B cell (primary cell): ENCODE measurements at regions of chr17 and their contacts with region 1.

Region 1: GRCh38 chr17:80195731-80196529 is 24.2 kb downstream of the SGSH start:
- DNase-seq: peak; percentile 74
- ATAC-seq: peak; percentile 24
- H3K4me3 ChIP-seq: no peak overlapping the region
- H3K4me3 Mint-ChIP-seq: no peak overlapping the region
- H3K27ac ChIP-seq: no peak overlapping the region
- H3K27ac Mint-ChIP-seq: no peak overlapping the region
- H3K4me1 ChIP-seq: no peaks in the 10 kb centered on the region
- H3K4me1 Mint-ChIP-seq: no peaks in the 10 kb centered on the region
- H3K27me3 ChIP-seq: peaks cover 0 to 11% (median 0%) of the 10 kb centered on the region in 4 experiments
- H3K27me3 Mint-ChIP-seq: peaks cover 16% of the 10 kb centered on the region
- CTCF ChIP-seq: peak; percentile 99

Region 2: DNA sequence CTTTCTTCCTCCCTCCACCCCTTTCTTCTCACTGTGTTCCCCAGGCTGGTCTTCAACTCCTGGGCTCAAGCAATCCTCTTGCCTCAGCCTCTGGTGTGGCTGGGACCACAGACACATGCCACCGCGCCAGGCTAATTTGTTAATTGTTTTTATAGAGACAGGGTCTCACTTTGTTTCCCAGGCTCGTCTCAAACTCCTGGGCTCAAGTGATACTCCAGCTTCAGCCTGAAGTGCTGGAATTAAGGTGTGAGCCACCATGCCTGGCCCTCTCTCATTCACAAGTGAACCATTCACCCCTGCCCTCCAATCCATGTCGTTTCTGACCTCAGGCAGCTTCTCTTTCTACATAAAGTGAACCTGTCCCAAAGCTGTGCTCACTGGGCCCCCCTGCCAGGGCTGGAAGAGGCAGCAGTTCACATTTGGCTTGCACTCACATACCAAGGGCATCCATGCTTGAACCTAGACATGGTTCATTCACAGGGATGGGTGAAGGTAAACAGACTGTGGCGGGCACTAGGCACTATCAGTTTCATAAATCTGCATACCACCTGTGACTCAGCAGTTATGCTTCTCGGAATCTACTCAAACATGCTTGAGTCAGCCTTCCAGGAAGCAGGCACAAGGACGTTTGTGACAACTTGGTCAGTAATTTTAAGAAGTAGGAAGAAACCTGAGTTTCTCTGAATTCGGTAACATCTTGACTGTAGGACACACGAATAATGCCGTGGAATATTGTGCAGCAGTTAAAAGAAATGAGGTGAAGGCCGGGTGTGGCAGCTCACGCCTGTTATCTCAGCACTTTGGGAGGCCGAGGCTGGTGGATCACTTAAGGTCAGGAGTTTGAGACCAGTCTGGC is 58.7 kb after region 1 on chr17:
- CTCF ChIA-PET with region 1: interaction called, 55 read pairs
- POLR2A ChIA-PET with region 1: no interaction called
- intact Hi-C with region 1: loop called (anchors 1 kb)
- DNase-seq: peak; percentile 68
- ATAC-seq: peak; percentile 56
- H3K4me3 ChIP-seq: no peak overlapping the region
- H3K4me3 Mint-ChIP-seq: peak overlapping the region; percentile 26
- H3K27ac ChIP-seq: no peak overlapping the region
- H3K27ac Mint-ChIP-seq: peak overlapping the region; percentile 61
- H3K4me1 ChIP-seq: peaks cover 6 to 11% of the 10 kb centered on the region in 2 donors
- H3K4me1 Mint-ChIP-seq: peaks cover 27% of the 10 kb centered on the region
- H3K27me3 ChIP-seq: no peaks in the 10 kb centered on the region
- H3K27me3 Mint-ChIP-seq: no peaks in the 10 kb centered on the region
- CTCF ChIP-seq: no peak

Region 3: GRCh38 chr17:80361495-80362220 is 165.7 kb after region 1 on chr17:
- CTCF ChIA-PET with region 1: interaction called, 26 read pairs
- POLR2A ChIA-PET with region 1: no interaction called
- intact Hi-C with region 1: no loop called
- DNase-seq: no peak
- ATAC-seq: no peak
- H3K4me3 ChIP-seq: no peak overlapping the region
- H3K4me3 Mint-ChIP-seq: no peak overlapping the region
- H3K27ac ChIP-seq: no peak overlapping the region
- H3K27ac Mint-ChIP-seq: no peak overlapping the region
- H3K4me1 ChIP-seq: no peaks in the 10 kb centered on the region
- H3K4me1 Mint-ChIP-seq: no peaks in the 10 kb centered on the region
- H3K27me3 ChIP-seq: no peaks in the 10 kb centered on the region
- H3K27me3 Mint-ChIP-seq: no peaks in the 10 kb centered on the region
- CTCF ChIP-seq: peak; percentile 32

Region 4: GRCh38 chr17:80720610-80721577 is 525.0 kb after region 1 on chr17:
- CTCF ChIA-PET with region 1: no interaction called
- POLR2A ChIA-PET with region 1: no interaction called
- intact Hi-C with region 1: no loop called
- DNase-seq: no peak
- ATAC-seq: no peak
- H3K4me3 ChIP-seq: no peak overlapping the region
- H3K4me3 Mint-ChIP-seq: no peak overlapping the region
- H3K27ac ChIP-seq: no peak overlapping the region
- H3K27ac Mint-ChIP-seq: no peak overlapping the region
- H3K4me1 ChIP-seq: peaks cover 6 to 10% of the 10 kb centered on the region in 2 donors
- H3K4me1 Mint-ChIP-seq: peaks cover 32% of the 10 kb centered on the region
- H3K27me3 ChIP-seq: no peaks in the 10 kb centered on the region
- H3K27me3 Mint-ChIP-seq: no peaks in the 10 kb centered on the region
- CTCF ChIP-seq: no peak